ENCODE measurements at regions of chr3 and their contacts with region 1.

Region 1: DNA sequence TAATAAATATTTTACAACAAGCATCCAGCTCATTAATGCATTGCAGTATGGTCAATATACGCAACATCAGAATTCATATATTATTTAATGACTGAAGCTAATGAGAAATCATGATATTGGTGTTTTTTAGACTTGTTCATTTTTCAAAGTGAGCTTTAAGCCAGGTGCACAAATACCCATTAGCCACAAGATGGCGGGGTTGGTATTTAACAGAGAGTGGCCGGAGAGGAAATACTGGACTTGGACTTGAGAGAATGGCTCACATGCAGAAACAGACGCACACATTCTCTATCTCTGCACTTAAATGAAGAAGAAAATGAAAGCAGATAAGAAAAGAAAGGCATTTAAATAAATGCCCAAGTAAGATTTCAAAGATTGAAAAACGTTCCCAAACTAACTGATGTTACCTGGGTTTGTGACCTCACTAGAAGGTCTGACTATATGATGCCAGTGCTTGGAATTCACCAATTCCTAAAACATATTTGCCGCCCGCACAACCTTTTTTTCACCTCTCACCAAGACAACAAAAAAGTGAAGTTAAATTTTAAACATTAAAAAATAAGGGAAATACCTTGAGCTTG is 21.2 kb upstream of the CRBN start:
- DNase-seq: peak; percentile 53
- ATAC-seq: no peak
- H3K4me3 Mint-ChIP-seq: no peak overlapping the region
- H3K27ac Mint-ChIP-seq: no peak overlapping the region
- H3K4me1 Mint-ChIP-seq: peaks cover 14% of the 10 kb centered on the region
- H3K27me3 Mint-ChIP-seq: no peaks in the 10 kb centered on the region

Region 2: GRCh38 chr3:2603692-2604289 is 596.9 kb before region 1 on chr3:
- CTCF ChIA-PET with region 1: no interaction called
- POLR2A ChIA-PET with region 1: no interaction called
- intact Hi-C with region 1: no loop called
- DNase-seq: no peak
- ATAC-seq: no peak
- H3K4me3 Mint-ChIP-seq: no peak overlapping the region
- H3K27ac Mint-ChIP-seq: no peak overlapping the region
- H3K4me1 Mint-ChIP-seq: no peaks in the 10 kb centered on the region
- H3K27me3 Mint-ChIP-seq: no peaks in the 10 kb centered on the region

Region 3: GRCh38 chr3:3126477-3127431 is 74.0 kb before region 1 on chr3 and contains the start of gene TRNT1:
- CTCF ChIA-PET with region 1: no interaction called
- POLR2A ChIA-PET with region 1: no interaction called
- intact Hi-C with region 1: no loop called
- DNase-seq: peak; percentile 98
- ATAC-seq: peak; percentile 91
- H3K4me3 Mint-ChIP-seq: peak within 1 kb of the TSS; percentile 99
- H3K27ac Mint-ChIP-seq: peak within 1 kb of the TSS; percentile 99
- H3K4me1 Mint-ChIP-seq: peaks cover 30% of the 10 kb centered on the region
- H3K27me3 Mint-ChIP-seq: no peaks in the 10 kb centered on the region
- total RNA-seq, gene TRNT1: 51.4 to 58.2 TPM

Region 4: GRCh38 chr3:3998140-3998922 is 797.6 kb after region 1 on chr3:
- CTCF ChIA-PET with region 1: interaction called, 28 read pairs
- POLR2A ChIA-PET with region 1: no interaction called
- intact Hi-C with region 1: loop called (anchors 1 kb)
- DNase-seq: peak; percentile 39
- ATAC-seq: peak; percentile 23
- H3K4me3 Mint-ChIP-seq: no peak overlapping the region
- H3K27ac Mint-ChIP-seq: no peak overlapping the region
- H3K4me1 Mint-ChIP-seq: no peaks in the 10 kb centered on the region
- H3K27me3 Mint-ChIP-seq: peaks cover 1% of the 10 kb centered on the region

Region 5: DNA sequence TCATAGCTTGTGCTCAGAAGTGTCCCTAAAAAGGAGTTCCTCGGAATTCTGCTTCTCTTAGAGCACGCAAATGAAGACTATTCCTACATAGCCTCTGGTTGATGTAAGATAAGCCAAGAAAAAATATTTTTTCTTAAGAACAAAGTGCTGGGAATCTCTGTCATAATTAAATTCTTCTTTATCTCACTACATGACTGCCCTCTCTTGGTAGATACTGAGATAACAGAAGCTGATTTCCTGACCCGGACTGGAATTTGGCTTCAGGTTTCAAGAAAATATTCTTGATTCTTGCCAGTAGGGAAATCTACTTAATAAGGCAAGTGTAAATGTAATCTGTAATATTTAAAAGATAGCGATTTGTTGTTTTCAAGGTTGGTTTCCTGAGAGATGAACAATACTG is 1071.1 kb after region 1 on chr3:
- CTCF ChIA-PET with region 1: interaction called, 6 read pairs
- POLR2A ChIA-PET with region 1: no interaction called
- intact Hi-C with region 1: loop called in 1 of 2 experiments (anchors 5 kb)
- DNase-seq: no peak
- ATAC-seq: no peak
- H3K4me3 Mint-ChIP-seq: no peak overlapping the region
- H3K27ac Mint-ChIP-seq: no peak overlapping the region
- H3K4me1 Mint-ChIP-seq: peaks cover 8% of the 10 kb centered on the region
- H3K27me3 Mint-ChIP-seq: no peaks in the 10 kb centered on the region

Region 6: GRCh38 chr3:4290272-4290893 is 1089.7 kb after region 1 on chr3:
- CTCF ChIA-PET with region 1: interaction called, 14 read pairs
- POLR2A ChIA-PET with region 1: no interaction called
- intact Hi-C with region 1: loop called (anchors 1 kb)
- DNase-seq: peak; percentile 52
- ATAC-seq: no peak
- H3K4me3 Mint-ChIP-seq: no peak overlapping the region
- H3K27ac Mint-ChIP-seq: no peak overlapping the region
- H3K4me1 Mint-ChIP-seq: peaks cover 14% of the 10 kb centered on the region
- H3K27me3 Mint-ChIP-seq: no peaks in the 10 kb centered on the region

Region 7: DNA sequence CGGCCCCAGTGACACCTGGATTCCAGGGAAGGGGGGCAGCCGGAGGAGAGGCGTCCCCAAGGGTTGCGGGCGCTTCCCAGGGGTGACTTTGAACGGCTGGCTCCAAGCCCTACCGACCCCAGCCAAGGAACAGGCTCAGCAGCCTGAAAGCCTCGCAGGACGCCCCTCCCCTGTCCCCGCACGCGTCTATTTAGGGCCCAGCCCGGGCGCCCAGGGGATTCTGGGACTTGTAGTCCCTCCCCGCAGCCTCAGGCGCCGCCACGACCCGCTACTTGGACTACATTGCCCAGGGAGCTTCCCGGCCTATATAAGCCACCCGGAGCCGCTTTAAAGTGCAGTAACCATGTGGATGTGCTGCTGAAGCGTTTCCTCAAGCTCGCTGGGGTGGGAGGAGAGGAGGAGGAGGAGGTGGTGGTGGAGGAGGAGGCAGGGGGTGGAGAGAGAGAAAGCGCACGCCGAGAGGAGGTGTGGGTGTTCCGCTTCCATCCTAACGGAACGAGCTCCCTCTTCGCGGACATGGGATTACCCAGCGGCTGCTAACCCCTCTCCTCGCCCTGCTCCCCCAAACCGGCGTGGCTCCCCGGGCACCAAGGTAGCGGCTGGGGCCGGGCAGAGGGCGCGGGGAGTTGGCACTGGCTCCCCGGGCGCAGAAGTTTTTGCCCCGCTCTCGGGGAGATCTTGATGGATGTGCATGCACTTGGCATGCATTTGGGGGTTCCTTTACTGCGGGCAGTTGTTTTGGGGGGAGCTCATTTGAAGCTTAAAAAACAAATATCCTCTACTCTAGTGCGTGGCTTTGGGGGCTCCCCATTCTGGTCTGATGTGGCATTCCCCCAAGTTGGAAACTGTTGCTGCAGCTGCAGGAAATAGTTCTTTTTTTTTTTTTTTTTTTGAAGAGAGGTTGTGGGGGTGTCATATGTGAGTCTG is 1292.6 kb after region 1 on chr3 and contains the start of gene ITPR1:
- CTCF ChIA-PET with region 1: no interaction called
- POLR2A ChIA-PET with region 1: no interaction called
- intact Hi-C with region 1: no loop called
- DNase-seq: peak; percentile 99
- ATAC-seq: peak; percentile 95
- H3K4me3 Mint-ChIP-seq: peak within 1 kb of the TSS; percentile 77
- H3K27ac Mint-ChIP-seq: peak within 1 kb of the TSS; percentile 71
- H3K4me1 Mint-ChIP-seq: peaks cover 32% of the 10 kb centered on the region
- H3K27me3 Mint-ChIP-seq: peaks cover 8% of the 10 kb centered on the region
- total RNA-seq, gene ITPR1: 48.6 to 55.6 TPM

Measured in activated CD4-positive, alpha-beta T cell treated with anti-CD3 and anti-CD28 coated beads for 36 hours (primary cell).